Activated T-helper 2 cell treated with anti-CD3 and anti-CD28 coated beads, Interferon-gamma antibody, Interleukin-2, Interleukin-4, amounts not matched to agents 10 μg/mL and 5 μg/mL and 100 μg/mL, durations not matched to agents 14 hours and 24 hours and 36 hours (primary cell): ENCODE measurements at regions of chr2 and their contacts with region 1.

Region 1: DNA sequence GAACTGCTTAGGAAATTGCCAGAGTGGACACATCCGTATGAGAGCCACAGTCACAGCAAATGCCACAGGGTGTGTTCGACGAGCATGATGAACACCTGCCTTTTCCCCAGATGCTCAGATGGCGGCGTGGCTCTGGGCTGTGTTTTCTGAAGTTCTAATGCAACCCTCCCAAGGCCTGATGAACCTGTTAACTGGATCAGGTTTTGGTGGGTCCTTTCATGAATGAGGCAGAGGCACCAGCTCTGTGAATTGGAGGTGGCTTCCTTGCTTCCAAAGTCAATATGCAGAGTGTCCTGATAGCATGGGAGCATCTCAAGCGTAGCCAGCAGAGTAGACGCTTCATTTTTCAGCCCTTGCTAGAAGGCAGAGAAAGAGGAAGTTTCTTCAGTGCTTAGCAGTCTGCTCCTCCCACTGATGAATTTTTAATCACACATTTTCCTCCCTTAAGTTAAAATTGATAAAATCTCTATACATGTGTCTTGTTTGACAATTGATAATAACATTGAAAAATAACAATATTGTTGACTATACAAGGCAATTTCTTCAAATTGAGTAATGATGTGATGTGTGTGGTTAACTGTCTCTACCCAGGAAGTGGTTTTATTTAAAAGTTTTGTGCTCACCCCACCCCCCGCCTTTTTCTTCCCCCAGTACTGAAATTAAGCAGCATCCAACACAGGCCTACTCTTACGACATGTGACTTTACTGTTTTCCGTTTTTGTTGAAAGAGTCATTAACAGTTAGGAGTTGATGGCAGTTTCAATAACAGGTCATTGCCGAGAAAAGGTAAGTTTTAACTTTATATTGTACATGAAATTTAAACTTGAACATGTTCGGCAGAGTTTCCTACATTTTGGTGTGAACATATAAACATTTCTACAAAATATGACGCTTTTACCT is at the start of gene ARHGAP15:
- DNase-seq: peak; percentile 66
- H3K4me3 Mint-ChIP-seq: peak within 1 kb of the TSS; percentile 75
- H3K27ac Mint-ChIP-seq: peak within 1 kb of the TSS; percentile 99
- H3K4me1 Mint-ChIP-seq: peaks cover 34% of the 10 kb centered on the region
- H3K27me3 Mint-ChIP-seq: no peaks in the 10 kb centered on the region
- total RNA-seq, gene ARHGAP15: 54.1 and 58.3 TPM in 2 replicates

Region 2: GRCh38 chr2:143051465-143051864 is 77.5 kb before region 1 on chr2:
- intact Hi-C with region 1: no loop called
- DNase-seq: no peak
- H3K4me3 Mint-ChIP-seq: no peak overlapping the region
- H3K27ac Mint-ChIP-seq: no peak overlapping the region
- H3K4me1 Mint-ChIP-seq: no peaks in the 10 kb centered on the region
- H3K27me3 Mint-ChIP-seq: peaks cover 24% of the 10 kb centered on the region

Region 3: DNA sequence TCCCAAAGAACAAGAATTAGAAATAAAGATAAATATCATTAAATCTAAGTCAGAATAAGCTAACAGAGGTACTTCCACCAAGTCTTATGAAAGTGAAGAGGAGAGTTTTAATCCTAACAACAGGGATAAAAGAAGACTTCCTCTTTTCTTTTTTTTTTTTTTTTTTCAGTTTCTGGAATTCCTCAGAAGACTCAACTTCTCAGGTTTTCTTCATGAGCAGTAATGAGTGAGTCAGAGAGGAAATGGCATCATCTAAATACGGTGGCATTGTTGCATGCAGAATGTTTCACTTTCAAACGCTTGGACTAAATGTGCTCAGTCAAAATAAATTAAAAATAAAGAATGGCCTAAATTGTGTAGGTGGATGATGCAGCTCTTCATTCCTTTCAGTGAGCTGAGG is 45.3 kb before region 1 on chr2:
- intact Hi-C with region 1: loop called (anchors 1 kb)
- DNase-seq: no peak
- H3K4me3 Mint-ChIP-seq: no peak overlapping the region
- H3K27ac Mint-ChIP-seq: peak overlapping the region; percentile 22
- H3K4me1 Mint-ChIP-seq: peaks cover 34% of the 10 kb centered on the region
- H3K27me3 Mint-ChIP-seq: peaks cover 6% of the 10 kb centered on the region

Region 4: GRCh38 chr2:143140864-143141661 is 12.1 kb after region 1 on chr2:
- intact Hi-C with region 1: loop called (anchors 1 kb)
- DNase-seq: no peak
- H3K4me3 Mint-ChIP-seq: no peak overlapping the region
- H3K27ac Mint-ChIP-seq: peak overlapping the region; percentile 76
- H3K4me1 Mint-ChIP-seq: peaks cover 75% of the 10 kb centered on the region
- H3K27me3 Mint-ChIP-seq: no peaks in the 10 kb centered on the region

Region 5: GRCh38 chr2:143177096-143177786 is 48.3 kb after region 1 on chr2:
- intact Hi-C with region 1: loop called (anchors 2 kb)
- DNase-seq: no peak
- H3K4me3 Mint-ChIP-seq: peak overlapping the region; percentile 74
- H3K27ac Mint-ChIP-seq: peak overlapping the region; percentile 90
- H3K4me1 Mint-ChIP-seq: peaks cover 39% of the 10 kb centered on the region
- H3K27me3 Mint-ChIP-seq: no peaks in the 10 kb centered on the region

Region 6: DNA sequence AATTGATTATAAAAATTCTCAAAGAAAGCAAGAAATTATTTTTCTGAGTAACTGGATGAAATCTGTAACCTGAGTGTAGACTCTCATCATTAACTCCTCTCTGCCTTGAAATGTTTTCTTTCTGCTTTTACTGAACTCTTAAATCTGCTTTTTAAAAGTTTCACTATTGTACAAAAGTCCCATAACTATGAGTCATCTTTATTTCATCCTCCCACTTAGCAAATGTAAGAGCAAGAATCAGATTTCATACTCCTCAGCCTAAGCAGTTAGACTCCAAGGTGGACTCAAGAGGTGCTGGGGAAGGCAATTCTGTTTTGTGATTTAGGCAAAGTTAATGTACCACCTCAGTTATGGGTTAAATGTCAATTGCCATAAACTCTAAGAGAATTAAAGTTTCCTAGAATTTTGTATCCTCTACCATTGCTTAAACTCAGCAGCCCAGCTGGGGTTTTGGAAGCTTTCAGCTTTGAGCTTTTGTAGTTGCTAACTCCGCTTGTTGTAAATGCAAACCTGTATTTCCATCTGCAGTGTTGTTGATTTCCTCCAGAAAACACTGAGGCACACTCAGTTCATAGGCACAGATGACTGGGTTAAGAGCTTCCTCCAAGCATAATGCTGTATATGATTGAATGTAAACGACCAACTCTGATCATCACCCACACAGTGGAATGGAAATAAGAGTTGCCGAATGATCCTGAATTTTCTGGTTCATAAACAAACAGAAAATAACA is 269.1 kb after region 1 on chr2:
- intact Hi-C with region 1: loop called (anchors 10 kb)
- DNase-seq: no peak
- H3K4me3 Mint-ChIP-seq: no peak overlapping the region
- H3K27ac Mint-ChIP-seq: no peak overlapping the region
- H3K4me1 Mint-ChIP-seq: peaks cover 17% of the 10 kb centered on the region
- H3K27me3 Mint-ChIP-seq: no peaks in the 10 kb centered on the region